Activated B cell treated with CpG ODN at 0.5 μM for 24 hours (primary cell): ENCODE measurements at regions of chr1 and their contacts with region 1.

Region 1: DNA sequence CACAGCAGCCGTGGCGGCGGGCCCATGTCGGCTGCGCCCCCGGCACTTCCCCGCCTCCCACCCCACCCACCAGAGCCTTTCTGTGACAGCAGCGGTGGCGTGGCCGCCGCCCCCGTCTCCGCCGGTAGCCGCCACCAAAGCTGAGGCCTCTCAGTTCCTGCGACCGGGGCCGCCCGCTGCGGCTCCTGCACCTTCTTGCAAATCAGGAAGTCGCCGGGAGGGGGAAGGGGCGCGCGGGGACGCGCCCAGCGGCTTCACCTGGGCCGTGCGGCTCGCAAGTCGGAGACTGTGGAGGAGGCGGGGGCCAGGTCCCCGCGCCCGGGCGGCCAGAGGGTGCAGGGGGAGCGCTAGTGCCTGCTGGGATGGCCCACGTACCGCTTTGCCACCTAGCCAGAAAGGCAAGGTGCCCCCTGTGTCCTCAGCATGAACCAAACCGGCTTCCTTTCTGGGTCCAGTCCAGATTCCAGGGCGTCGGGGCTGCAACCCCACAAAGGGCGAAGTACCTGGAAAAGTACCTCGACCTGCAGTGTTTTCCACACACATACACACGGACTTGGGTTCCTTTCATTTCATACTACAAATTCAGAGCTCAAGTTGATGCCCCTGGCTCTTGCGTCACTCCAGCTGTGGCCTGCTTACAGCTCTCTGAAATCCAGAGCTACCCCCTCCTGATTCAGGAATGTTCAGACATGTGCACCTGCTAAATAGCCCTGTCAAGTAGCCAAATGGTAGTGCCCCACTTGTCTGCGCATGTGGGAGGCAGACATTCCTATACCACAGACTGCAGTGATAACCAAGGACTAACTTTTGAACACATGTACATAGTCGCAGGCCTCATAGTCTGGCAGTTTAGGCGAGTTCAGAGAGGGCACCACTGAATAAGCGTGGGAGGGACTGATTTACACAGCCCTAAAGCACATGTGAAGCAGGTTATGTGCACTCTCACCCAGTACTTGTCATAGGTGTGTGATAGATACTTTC is at the start of gene DENND1B:
- DNase-seq: peak; percentile 81
- ATAC-seq: peak; percentile 72
- H3K4me3 Mint-ChIP-seq: peak within 1 kb of the TSS; percentile 87
- H3K27ac Mint-ChIP-seq: peak within 1 kb of the TSS; percentile 96
- H3K4me1 Mint-ChIP-seq: peaks cover 69% of the 10 kb centered on the region
- H3K27me3 Mint-ChIP-seq: no peaks in the 10 kb centered on the region
- CTCF ChIP-seq: no peak
- total RNA-seq, gene DENND1B: 15.5 and 19.2 TPM in 2 replicates

Region 2: DNA sequence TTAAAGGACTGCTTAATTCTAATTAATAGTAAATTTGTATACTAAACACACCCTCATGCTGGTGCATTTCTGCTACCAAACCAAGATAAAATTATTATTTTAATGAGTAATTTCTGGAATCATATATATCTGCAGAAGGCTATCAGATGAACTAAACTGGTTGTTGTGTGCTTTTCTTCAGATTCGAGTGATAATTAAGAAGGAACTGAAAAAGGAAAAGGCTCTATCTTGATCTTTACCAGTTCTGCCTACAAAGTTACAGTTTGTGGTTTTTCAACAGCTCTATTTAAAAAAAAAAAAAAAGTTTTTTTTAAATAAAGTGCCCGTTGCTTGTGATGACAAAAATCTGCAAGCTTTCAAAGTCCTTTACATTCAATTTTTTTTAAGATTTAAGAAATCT is 14.0 kb before region 1 on chr1:
- CTCF ChIA-PET with region 1: no interaction called
- POLR2A ChIA-PET with region 1: interaction called, 12 read pairs
- intact Hi-C with region 1: loop called (anchors 1 kb)
- DNase-seq: no peak
- ATAC-seq: peak; percentile 67
- H3K4me3 Mint-ChIP-seq: peak overlapping the region; percentile 45
- H3K27ac Mint-ChIP-seq: no peak overlapping the region
- H3K4me1 Mint-ChIP-seq: peaks cover 18% of the 10 kb centered on the region
- H3K27me3 Mint-ChIP-seq: no peaks in the 10 kb centered on the region
- CTCF ChIP-seq: no peak

Region 3: DNA sequence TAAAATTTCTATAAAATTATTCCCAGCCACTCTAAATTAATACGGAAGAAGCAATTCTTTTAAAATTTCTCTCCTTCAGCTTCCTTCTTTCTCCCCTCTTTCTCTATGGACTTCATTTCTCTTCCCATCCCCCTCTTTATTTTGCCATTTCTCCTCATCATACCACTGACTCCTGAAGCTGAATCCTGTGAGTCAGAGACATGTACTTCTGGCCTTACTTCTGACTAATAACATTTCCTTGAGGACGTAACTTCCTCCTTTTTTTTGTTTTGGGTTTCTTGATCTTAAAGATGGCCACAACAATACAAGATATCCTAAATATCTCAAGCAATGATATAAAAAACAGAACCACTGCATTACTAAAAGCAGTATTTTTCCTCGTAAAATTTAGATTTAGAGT is 63.3 kb after region 1 on chr1:
- CTCF ChIA-PET with region 1: no interaction called
- POLR2A ChIA-PET with region 1: no interaction called
- intact Hi-C with region 1: loop called (anchors 5 kb)
- DNase-seq: no peak
- ATAC-seq: peak; percentile 56
- H3K4me3 Mint-ChIP-seq: no peak overlapping the region
- H3K27ac Mint-ChIP-seq: peak overlapping the region; percentile 2
- H3K4me1 Mint-ChIP-seq: peaks cover 7% of the 10 kb centered on the region
- H3K27me3 Mint-ChIP-seq: no peaks in the 10 kb centered on the region
- CTCF ChIP-seq: no peak

Region 4: GRCh38 chr1:197902454-197903195 is 127.1 kb after region 1 on chr1 and contains the start of gene C1orf53:
- CTCF ChIA-PET with region 1: interaction called, 5 read pairs
- POLR2A ChIA-PET with region 1: interaction called, 7 read pairs
- intact Hi-C with region 1: loop called (anchors 1 kb)
- DNase-seq: peak; percentile 83
- ATAC-seq: peak; percentile 92
- H3K4me3 Mint-ChIP-seq: peak within 1 kb of the TSS; percentile 90
- H3K27ac Mint-ChIP-seq: peak within 1 kb of the TSS; percentile 67
- H3K4me1 Mint-ChIP-seq: peaks cover 14% of the 10 kb centered on the region
- H3K27me3 Mint-ChIP-seq: peaks cover 41% of the 10 kb centered on the region
- CTCF ChIP-seq: no peak
- total RNA-seq, gene C1orf53: 0.81 and 1.2 TPM in 2 replicates

Region 5: DNA sequence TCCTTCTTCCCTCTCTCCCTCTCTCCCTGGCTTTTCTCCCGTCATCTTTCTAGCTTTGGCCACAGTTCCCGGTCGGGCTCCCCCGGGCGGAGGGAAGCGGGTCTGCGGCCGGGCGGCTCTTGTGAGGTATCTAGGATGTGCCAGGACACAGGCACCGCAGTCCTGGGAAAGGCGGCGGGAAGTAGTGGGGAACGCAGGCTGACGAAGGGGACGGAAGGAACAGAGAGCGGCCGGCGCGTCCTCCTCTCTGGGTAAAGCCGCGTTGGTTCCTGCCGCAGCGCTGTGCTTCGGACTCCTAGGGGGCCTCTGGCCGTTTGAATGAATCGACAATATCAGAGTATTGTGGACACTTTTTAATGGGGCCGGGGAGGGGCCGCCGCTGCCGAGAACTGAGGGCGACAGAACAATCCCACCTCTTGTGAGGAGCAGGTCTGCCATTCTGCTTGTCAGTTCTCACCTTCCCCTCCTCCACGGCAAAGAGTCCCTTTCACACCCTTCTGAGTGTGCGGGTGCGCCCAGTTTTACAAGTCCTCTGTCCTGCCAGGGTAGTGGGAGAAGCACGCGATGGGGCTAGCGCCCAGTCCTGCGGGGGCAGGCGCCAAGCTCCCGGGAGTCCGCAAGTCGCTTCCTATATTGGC is 140.4 kb after region 1 on chr1:
- CTCF ChIA-PET with region 1: no interaction called
- POLR2A ChIA-PET with region 1: interaction called, 8 read pairs
- intact Hi-C with region 1: loop called (anchors 5 kb)
- DNase-seq: no peak
- ATAC-seq: peak; percentile 12
- H3K4me3 Mint-ChIP-seq: peak overlapping the region; percentile 65
- H3K27ac Mint-ChIP-seq: no peak overlapping the region
- H3K4me1 Mint-ChIP-seq: peaks cover 83% of the 10 kb centered on the region
- H3K27me3 Mint-ChIP-seq: peaks cover 84% of the 10 kb centered on the region
- CTCF ChIP-seq: no peak

Region 6: DNA sequence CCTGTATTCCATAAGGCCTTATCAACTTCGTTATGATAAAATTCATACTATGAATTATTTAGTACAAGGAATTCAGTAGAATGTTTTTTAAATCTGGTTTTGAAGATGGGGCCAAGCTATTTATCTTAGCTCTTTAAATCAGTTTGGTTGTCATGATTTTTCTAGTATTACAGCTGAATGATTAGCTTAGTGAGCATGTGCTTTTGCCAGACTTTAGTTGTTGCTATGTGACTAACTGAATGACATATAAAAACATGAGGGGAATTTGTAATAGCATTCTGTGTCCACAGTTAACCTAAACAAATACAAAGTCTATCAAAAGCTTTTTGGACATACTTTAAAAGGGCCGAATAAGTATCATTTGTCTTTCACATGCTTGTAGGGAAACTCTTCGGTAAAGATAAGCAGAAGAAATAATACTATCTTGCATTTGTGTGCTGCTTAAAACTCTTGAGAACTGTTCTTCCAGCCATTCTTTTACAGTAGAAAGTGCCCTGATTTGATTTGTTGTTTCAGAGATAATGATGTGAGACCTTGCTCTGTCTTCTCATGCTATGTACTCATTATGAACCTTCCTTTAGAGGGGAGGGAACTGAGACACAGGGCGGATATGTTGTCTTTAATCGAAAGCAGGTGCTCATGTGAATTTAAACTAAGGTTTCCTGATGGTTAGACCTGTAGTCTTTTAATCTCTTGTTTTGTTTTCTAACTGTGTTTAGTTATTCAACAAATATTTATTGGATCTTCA is 400.0 kb after region 1 on chr1:
- CTCF ChIA-PET with region 1: no interaction called
- POLR2A ChIA-PET with region 1: no interaction called
- intact Hi-C with region 1: loop called (anchors 5 kb)
- DNase-seq: no peak
- ATAC-seq: peak; percentile 74
- H3K4me3 Mint-ChIP-seq: peak overlapping the region; percentile 53
- H3K27ac Mint-ChIP-seq: peak overlapping the region; percentile 74
- H3K4me1 Mint-ChIP-seq: peaks cover 83% of the 10 kb centered on the region
- H3K27me3 Mint-ChIP-seq: no peaks in the 10 kb centered on the region
- CTCF ChIP-seq: no peak

Region 7: DNA sequence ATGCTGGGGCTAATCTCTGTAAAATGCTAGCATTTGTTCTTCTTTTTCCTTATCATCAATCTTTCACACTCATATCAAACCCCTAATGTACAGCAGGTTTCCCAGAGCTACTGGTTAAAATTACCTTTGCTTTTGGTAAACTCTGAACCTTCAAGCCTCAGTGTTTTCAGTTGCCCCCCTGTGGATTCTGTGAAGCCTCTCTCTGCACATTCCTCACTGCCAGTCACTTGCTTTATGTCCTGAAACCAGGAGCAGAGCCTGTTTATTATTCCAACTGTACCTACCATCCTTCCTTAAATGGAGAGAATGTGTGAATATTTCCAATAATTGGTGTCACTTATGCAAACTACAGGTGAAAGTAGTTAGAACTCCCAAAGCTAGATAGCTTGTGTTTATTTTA is 515.5 kb after region 1 on chr1:
- CTCF ChIA-PET with region 1: no interaction called
- POLR2A ChIA-PET with region 1: no interaction called
- intact Hi-C with region 1: no loop called
- DNase-seq: no peak
- ATAC-seq: no peak
- H3K4me3 Mint-ChIP-seq: no peak overlapping the region
- H3K27ac Mint-ChIP-seq: no peak overlapping the region
- H3K4me1 Mint-ChIP-seq: no peaks in the 10 kb centered on the region
- H3K27me3 Mint-ChIP-seq: no peaks in the 10 kb centered on the region
- CTCF ChIP-seq: no peak